ENCODE measurements at regions of chr18 and their contacts with region 1.

Region 1: DNA sequence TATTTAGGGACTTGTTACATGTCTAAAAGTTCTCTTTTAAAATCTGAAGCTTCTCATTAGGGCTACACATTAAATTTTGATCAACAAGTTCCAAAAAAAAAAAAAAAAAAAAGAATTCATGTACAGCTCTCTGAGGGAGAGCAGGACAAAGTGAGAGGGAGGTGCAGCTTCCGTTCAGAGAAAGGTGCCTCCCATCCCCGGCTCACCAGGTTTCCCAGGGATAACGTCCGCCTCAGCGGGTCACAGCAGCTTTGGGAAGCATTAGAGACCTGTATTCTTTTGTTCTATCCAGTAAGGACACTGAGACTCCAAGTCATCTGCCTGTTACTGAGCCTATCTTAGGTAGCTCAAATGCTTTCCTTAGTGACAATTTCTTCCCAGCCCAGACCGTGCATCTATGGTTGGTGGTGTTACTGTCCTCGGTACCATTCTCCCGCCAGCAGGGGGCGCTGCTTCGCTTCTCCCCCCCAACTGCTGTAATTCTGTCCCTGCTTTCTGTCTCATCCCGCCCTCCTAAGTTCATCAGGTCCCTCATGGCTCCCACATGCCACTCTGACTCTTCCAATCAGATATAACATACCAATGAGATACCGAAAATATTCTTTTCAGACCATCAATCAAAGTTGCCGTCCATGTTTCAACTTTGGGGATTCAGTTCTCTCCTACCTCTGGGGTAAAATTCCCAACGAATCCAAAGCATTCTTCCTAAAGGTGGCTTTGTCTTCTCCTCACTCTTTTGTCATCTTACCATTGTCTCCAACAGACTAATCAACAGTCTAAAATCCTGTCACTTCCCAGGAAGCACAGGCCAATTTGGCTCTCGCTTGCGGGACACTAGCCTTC is 466.5 kb downstream of the METTL4 start:
- DNase-seq: peak in 5 of 10 donors; percentile 19 to 79 (median 66)

Region 2: GRCh38 chr18:596288-596881 is 1508.5 kb before region 1 on chr18:
- intact Hi-C with region 1: no loop called
- DNase-seq: peak in 7 of 10 donors; percentile 32 to 95 (median 56)

Region 3: DNA sequence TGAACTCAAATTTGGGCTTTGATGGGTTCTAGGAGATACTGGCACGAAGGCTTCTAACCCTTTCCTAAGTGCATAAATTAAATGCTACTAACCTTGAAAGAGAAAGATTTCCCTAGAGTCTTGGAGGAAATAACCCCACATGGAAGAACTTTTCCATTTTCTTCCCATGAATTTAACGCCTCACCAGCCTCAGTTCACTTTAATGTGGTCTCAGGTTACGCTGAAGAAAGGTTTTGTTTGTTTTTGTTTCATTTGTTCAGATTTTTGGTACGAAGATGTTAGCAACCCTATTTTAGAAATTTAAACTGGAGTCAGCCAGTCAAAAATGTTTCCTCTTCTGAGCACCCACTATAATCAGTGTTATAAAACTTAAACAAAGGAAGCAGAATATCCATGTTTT is 435.7 kb after region 1 on chr18:
- intact Hi-C with region 1: loop called (anchors 5 kb)
- DNase-seq: no peak